ENCODE measurements at regions of chr19 and their contacts with region 1.

Region 1: DNA sequence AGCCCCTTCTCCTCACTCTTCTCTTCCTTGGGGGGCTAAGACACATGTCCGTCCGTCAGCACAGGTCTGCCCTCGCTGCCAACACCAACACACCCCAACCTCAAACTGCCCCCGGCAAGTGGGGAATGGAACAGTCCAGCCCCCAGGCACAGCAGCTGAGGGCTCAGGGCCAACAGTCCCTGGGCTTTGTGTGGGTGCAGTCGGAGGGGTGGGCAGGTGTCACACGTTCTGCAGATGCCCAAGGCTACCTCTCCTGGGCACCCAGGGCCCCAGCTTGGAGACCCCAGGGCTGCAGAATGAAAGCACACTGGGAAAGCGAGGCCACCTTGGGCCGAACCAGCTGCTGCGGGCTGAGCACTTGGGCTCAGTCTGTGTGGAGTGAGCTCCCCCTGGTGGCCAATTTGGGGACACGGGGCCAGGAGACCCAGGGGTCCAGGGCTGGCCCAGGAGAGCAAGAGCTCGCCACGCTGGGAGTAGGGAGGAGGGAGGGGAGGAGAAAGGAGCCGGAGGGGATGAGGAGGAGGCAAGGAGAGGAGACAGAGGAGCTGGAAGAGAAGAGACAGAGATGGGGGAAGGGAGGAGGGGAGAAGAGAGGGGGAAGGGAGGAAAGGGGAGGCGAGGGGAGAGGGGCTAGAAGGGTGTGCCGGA is 14.0 kb upstream of the ATP8B3 start:
- H3K4me3 ChIP-seq: no peak overlapping the region
- H3K27ac ChIP-seq: no peak overlapping the region
- H3K4me1 ChIP-seq: no peaks in the 10 kb centered on the region
- CTCF ChIP-seq: peak; percentile 97

Region 2: DNA sequence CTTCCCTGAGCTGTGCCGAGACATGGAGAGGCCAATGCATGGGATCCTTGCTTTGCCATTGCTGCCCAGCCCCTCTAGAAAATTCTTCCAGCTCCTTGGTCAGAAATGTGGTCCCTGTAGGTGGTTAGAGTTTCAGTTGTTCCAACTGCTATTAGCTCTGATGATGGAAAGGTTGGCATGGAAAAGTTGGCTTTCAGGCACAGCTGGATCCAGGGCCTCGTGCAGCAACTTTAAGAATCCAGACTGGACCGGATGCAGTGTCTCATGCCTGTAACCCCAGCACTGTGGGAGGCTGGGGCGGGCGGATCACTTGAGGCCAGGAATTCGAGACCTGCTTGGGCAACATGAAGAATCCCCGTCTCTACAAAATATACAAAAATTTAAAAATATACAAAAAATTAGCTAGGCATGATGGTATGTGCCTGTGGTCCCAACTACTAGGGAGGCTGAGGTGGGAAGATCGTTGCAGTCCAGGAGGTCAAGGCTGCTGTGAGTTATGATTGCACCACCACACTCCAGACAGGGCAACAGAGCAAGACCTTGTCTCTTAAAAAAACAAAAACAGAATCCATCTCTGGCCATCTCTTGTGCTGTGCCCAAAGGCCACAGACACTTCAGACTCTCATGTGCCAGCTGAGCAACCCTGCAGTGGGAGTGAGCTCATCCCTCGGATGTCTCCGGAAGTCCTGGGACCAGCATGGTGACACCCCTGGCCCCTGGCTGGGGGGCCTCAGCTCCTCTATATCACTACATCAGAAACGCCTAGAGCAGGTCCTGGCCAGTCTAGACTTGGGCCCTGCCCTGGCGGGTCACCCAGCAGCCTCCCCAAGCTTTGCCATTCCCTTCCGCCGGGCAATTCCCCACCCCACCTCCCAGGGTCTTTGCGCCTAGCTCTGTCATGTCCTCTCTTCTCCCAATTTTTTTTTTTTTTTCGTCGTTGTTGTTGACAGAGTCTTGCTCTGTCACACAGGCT is 274.7 kb before region 1 on chr19:
- CTCF ChIA-PET with region 1: interaction called, 15 read pairs
- POLR2A ChIA-PET with region 1: no interaction called
- H3K4me3 ChIP-seq: no peak overlapping the region
- H3K27ac ChIP-seq: no peak overlapping the region
- H3K4me1 ChIP-seq: no peaks in the 10 kb centered on the region
- CTCF ChIP-seq: no peak

Region 3: GRCh38 chr19:1767464-1767933 is 58.5 kb before region 1 on chr19:
- CTCF ChIA-PET with region 1: interaction called, 21 read pairs
- POLR2A ChIA-PET with region 1: no interaction called
- H3K4me3 ChIP-seq: no peak overlapping the region
- H3K27ac ChIP-seq: no peak overlapping the region
- H3K4me1 ChIP-seq: no peaks in the 10 kb centered on the region
- CTCF ChIP-seq: peak; percentile 84

Region 4: GRCh38 chr19:1780272-1780958 is 45.6 kb before region 1 on chr19:
- CTCF ChIA-PET with region 1: interaction called, 21 read pairs
- POLR2A ChIA-PET with region 1: no interaction called
- H3K4me3 ChIP-seq: no peak overlapping the region
- H3K27ac ChIP-seq: no peak overlapping the region
- H3K4me1 ChIP-seq: no peaks in the 10 kb centered on the region
- CTCF ChIP-seq: no peak

Region 5: GRCh38 chr19:1812469-1813196 is 13.4 kb before region 1 on chr19:
- CTCF ChIA-PET with region 1: interaction called, 17 read pairs
- POLR2A ChIA-PET with region 1: interaction called, 7 read pairs
- H3K4me3 ChIP-seq: peak overlapping the region; percentile 48
- H3K27ac ChIP-seq: peak overlapping the region; percentile 24; the same call in 1 of the 2 replicates
- H3K4me1 ChIP-seq: no peaks in the 10 kb centered on the region
- CTCF ChIP-seq: peak; percentile 91

Region 6: DNA sequence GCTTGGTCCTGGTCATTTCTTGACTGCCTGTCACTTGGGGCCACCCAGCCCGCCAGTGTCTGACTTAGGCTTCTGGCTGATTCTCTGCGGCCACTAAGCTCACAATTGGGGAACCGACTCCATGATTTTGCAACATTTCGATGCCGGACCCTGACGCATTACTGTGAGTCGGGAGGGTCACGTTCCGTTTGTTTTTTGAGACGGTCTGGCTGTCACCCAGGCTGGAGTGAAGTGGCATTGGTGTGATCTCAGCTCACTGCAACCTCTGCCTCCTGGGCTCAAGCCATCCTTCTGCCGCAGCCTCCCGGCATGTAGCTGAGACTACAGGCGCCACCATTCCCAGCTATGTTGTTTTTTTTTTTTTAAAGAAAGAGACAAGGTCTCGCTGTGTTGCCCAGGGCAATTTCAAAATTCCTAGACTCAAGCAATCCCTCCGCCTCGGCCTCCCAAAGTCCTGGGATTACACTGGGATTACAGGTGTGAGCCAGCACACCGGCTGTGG is 76.0 kb after region 1 on chr19:
- CTCF ChIA-PET with region 1: no interaction called
- POLR2A ChIA-PET with region 1: no interaction called
- H3K4me3 ChIP-seq: no peak overlapping the region
- H3K27ac ChIP-seq: no peak overlapping the region
- H3K4me1 ChIP-seq: no peaks in the 10 kb centered on the region; the same call in 1 of the 2 replicates
- CTCF ChIP-seq: no peak

Measured in HEK293 (cell line).